ENCODE measurements at regions of chrX and their contacts with region 1.

Region 1: GRCh38 chrX:119852382-119853353 is at the start of gene UPF3B:
- DNase-seq: peak; percentile 81 to 98 (median 93)
- ATAC-seq: peak; percentile 95 to 97
- H3K4me3 Mint-ChIP-seq: peak within 1 kb of the TSS; percentile 97 to 100 (median 99)
- H3K27ac Mint-ChIP-seq: peak within 1 kb of the TSS; percentile 95 to 100 (median 99)
- H3K4me1 Mint-ChIP-seq: peaks cover 6 to 18% (median 13%) of the 10 kb centered on the region in 4 donors
- H3K27me3 Mint-ChIP-seq: no peaks in the 10 kb centered on the region
- polyA plus RNA-seq, gene UPF3B: 8.6 to 11.0 (median 9.2) TPM

Region 2: GRCh38 chrX:119753571-119754257 is 99.0 kb before region 1 on chrX:
- POLR2A ChIA-PET with region 1: no interaction called
- DNase-seq: peak in 9 of 10 donors; percentile 32 to 87 (median 69)
- ATAC-seq: peak; percentile 34 to 56
- H3K4me3 Mint-ChIP-seq: peak overlapping the region in 9 of 10 donors; percentile 39 to 84 (median 63)
- H3K27ac Mint-ChIP-seq: peak overlapping the region; percentile 64 to 98 (median 96)
- H3K4me1 Mint-ChIP-seq: peaks cover 23 to 59% (median 49%) of the 10 kb centered on the region in 4 donors
- H3K27me3 Mint-ChIP-seq: no peaks in the 10 kb centered on the region

Region 3: GRCh38 chrX:119871599-119872395 is 19.1 kb after region 1 on chrX and contains the starts of genes NDUFA1 and RNF113A:
- POLR2A ChIA-PET with region 1: interaction called, 37 read pairs
- DNase-seq: peak; percentile 70 to 93 (median 84)
- ATAC-seq: peak; percentile 89 to 90
- H3K4me3 Mint-ChIP-seq: peak within 1 kb of the TSS; percentile 94 to 100 (median 98)
- H3K27ac Mint-ChIP-seq: peak within 1 kb of the TSS; percentile 95 to 100 (median 99)
- H3K4me1 Mint-ChIP-seq: peaks cover 5 to 39% (median 22%) of the 10 kb centered on the region in 4 donors
- H3K27me3 Mint-ChIP-seq: no peaks in the 10 kb centered on the region
- polyA plus RNA-seq, gene NDUFA1: 277 to 382 (median 308) TPM
- polyA plus RNA-seq, gene RNF113A: 48.8 to 69.5 (median 51.3) TPM